CD8-positive, alpha-beta memory T cell (primary cell): ENCODE measurements at regions of chr20 and their contacts with region 1.

Region 1: DNA sequence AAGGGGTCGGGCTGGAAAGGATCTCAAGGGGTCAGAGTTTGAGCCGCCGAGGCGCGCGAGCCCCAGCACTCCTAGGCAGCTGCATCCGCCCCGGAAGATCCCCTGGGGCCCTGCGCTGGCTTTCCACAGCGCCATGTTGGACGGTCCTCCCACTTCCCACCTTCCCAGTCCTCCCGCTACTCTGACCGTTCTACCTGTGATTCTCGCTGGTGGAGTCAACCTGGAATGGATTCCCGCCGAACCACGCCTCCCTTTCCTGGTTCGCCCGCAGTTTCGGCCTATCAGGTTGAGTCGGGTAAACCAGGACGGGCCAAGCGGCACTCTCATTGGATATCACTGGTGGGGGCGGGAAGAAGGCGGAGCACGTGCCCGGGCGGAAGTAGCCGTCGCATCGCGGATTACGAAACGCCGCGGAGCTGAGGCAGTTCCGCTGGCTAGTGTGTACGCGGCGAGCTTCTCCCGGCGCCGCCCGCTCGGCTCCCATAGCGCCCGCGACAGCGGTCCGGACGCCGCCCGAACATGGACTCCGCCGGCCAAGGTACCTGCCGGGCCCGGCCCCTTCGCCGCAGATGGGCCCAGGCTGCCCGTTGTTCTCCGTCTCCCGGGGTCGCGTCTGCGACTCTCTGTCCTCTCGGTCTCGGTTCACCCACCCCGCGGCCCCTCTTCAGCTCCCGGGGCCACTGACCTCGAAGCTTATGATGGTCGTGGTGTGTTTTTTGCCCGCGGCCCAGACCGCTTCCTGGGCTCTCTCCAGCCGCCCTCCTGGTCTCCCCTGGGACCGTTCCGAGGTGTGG is at the start of gene TPD52L2:
- DNase-seq: peak; percentile 96 to 98 (median 96)
- H3K4me3 ChIP-seq: peak within 1 kb of the TSS; percentile 79
- H3K4me3 Mint-ChIP-seq: peak within 1 kb of the TSS; percentile 92 to 99 (median 95)
- H3K27ac ChIP-seq: peak within 1 kb of the TSS; percentile 80
- H3K27ac Mint-ChIP-seq: peak within 1 kb of the TSS; percentile 90 to 99 (median 96)
- H3K4me1 ChIP-seq: peaks cover 21% of the 10 kb centered on the region
- H3K4me1 Mint-ChIP-seq: peaks cover 19 to 38% (median 32%) of the 10 kb centered on the region in 3 donors
- H3K27me3 ChIP-seq: no peaks in the 10 kb centered on the region
- H3K27me3 Mint-ChIP-seq: no peaks in the 10 kb centered on the region
- total RNA-seq, gene TPD52L2: 60.0 to 64.4 TPM

Region 2: GRCh38 chr20:63782051-63782471 is 83.0 kb before region 1 on chr20:
- CTCF ChIA-PET with region 1: interaction called, 11 read pairs
- POLR2A ChIA-PET with region 1: no interaction called
- DNase-seq: peak; percentile 53 to 88 (median 70)
- H3K4me3 ChIP-seq: no peak overlapping the region
- H3K4me3 Mint-ChIP-seq: peak overlapping the region; percentile 22 to 90 (median 53)
- H3K27ac ChIP-seq: no peak overlapping the region
- H3K27ac Mint-ChIP-seq: peak overlapping the region in 7 of 8 donors; percentile 44 to 89 (median 84)
- H3K4me1 ChIP-seq: peaks cover 17% of the 10 kb centered on the region
- H3K4me1 Mint-ChIP-seq: peaks cover 14 to 20% (median 18%) of the 10 kb centered on the region in 3 donors
- H3K27me3 ChIP-seq: no peaks in the 10 kb centered on the region
- H3K27me3 Mint-ChIP-seq: no peaks in the 10 kb centered on the region

Region 3: GRCh38 chr20:63854069-63854765 is 10.8 kb before region 1 on chr20:
- CTCF ChIA-PET with region 1: interaction called, 12 read pairs
- POLR2A ChIA-PET with region 1: no interaction called
- DNase-seq: no peak
- H3K4me3 ChIP-seq: no peak overlapping the region
- H3K4me3 Mint-ChIP-seq: no peak overlapping the region
- H3K27ac ChIP-seq: no peak overlapping the region
- H3K27ac Mint-ChIP-seq: peak overlapping the region in 1 of 8 donors; percentile 70
- H3K4me1 ChIP-seq: peaks cover 26% of the 10 kb centered on the region
- H3K4me1 Mint-ChIP-seq: peaks cover 19 to 25% (median 24%) of the 10 kb centered on the region in 3 donors
- H3K27me3 ChIP-seq: no peaks in the 10 kb centered on the region
- H3K27me3 Mint-ChIP-seq: peaks cover 13 to 16% of the 10 kb centered on the region in 2 donors

Region 4: GRCh38 chr20:63891061-63892002 is 26.3 kb after region 1 on chr20:
- CTCF ChIA-PET with region 1: interaction called, 14 read pairs
- POLR2A ChIA-PET with region 1: interaction called, 4 read pairs
- DNase-seq: no peak
- H3K4me3 ChIP-seq: no peak overlapping the region
- H3K4me3 Mint-ChIP-seq: peak overlapping the region in 1 of 7 donors; percentile 22
- H3K27ac ChIP-seq: no peak overlapping the region
- H3K27ac Mint-ChIP-seq: peak overlapping the region in 3 of 8 donors; percentile 5 to 58 (median 53)
- H3K4me1 ChIP-seq: peaks cover 10% of the 10 kb centered on the region
- H3K4me1 Mint-ChIP-seq: peaks cover 11 to 17% (median 13%) of the 10 kb centered on the region in 3 donors
- H3K27me3 ChIP-seq: no peaks in the 10 kb centered on the region
- H3K27me3 Mint-ChIP-seq: no peaks in the 10 kb centered on the region